Activated CD8-positive, alpha-beta memory T cell treated with anti-CD3 and anti-CD28 coated beads, Interleukin-2, amount 10 ng/mL, durations not matched to agents 7 days and 5 days (primary cell): ENCODE measurements at regions of chr14 and their contacts with region 1.

Region 1: GRCh38 chr14:20855652-20856291 is 35.4 kb upstream of the RNASE3 start:
- DNase-seq: peak; percentile 69
- ATAC-seq: peak; percentile 86
- H3K4me3 Mint-ChIP-seq: no peak overlapping the region
- H3K27ac Mint-ChIP-seq: no peak overlapping the region
- H3K4me1 Mint-ChIP-seq: no peaks in the 10 kb centered on the region
- H3K27me3 Mint-ChIP-seq: peaks cover 43% of the 10 kb centered on the region

Region 2: DNA sequence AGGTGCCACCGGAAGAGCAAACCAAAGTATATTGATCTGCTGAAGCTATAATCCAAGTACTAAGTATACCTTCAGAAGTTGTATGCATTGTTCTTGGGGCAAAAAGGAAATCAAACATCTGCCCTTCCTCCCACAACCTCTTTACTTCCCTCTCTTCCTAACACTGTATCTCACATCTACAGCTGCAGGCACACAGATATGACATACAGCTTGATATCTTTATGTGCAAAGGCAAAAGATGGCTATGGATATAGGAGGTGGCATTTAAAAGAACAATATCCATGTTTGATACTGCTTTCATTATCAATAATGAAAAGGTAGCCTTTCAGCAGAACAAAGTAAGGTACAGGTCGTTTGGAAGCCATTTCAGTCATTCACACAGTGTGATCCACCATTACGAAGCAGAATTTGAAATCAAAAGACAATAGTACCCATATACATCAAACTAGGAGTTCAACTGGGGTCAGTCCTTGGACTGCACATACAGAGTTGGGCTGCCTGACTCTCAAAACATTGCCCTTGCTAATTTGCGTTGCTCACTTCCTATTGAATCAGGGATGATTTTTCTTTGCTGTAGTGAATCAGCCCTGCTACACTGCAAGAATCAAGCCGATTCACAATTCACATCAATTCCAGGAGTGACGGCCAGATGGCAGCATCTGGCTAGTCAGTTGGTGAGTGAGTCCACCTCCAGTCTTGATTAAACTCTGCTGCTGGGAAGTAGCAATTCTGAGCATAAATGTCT is 158.3 kb before region 1 on chr14:
- CTCF ChIA-PET with region 1: interaction called, 21 read pairs
- DNase-seq: peak; percentile 76
- ATAC-seq: peak; percentile 76
- H3K4me3 Mint-ChIP-seq: no peak overlapping the region
- H3K27ac Mint-ChIP-seq: no peak overlapping the region
- H3K4me1 Mint-ChIP-seq: peaks cover 19% of the 10 kb centered on the region
- H3K27me3 Mint-ChIP-seq: peaks cover 2% of the 10 kb centered on the region

Region 3: GRCh38 chr14:20818861-20819260 is 36.9 kb before region 1 on chr14:
- CTCF ChIA-PET with region 1: no interaction called
- DNase-seq: no peak
- ATAC-seq: no peak
- H3K4me3 Mint-ChIP-seq: no peak overlapping the region
- H3K27ac Mint-ChIP-seq: no peak overlapping the region
- H3K4me1 Mint-ChIP-seq: no peaks in the 10 kb centered on the region
- H3K27me3 Mint-ChIP-seq: peaks cover 19% of the 10 kb centered on the region

Region 4: GRCh38 chr14:20873370-20874177 is 17.8 kb after region 1 on chr14:
- CTCF ChIA-PET with region 1: interaction called, 26 read pairs
- DNase-seq: peak; percentile 86
- ATAC-seq: peak; percentile 90
- H3K4me3 Mint-ChIP-seq: peak overlapping the region; percentile 8
- H3K27ac Mint-ChIP-seq: no peak overlapping the region
- H3K4me1 Mint-ChIP-seq: peaks cover 16% of the 10 kb centered on the region
- H3K27me3 Mint-ChIP-seq: peaks cover 38% of the 10 kb centered on the region

Region 5: GRCh38 chr14:20904393-20905029 is 48.7 kb after region 1 on chr14:
- CTCF ChIA-PET with region 1: no interaction called
- DNase-seq: no peak
- ATAC-seq: no peak
- H3K4me3 Mint-ChIP-seq: no peak overlapping the region
- H3K27ac Mint-ChIP-seq: no peak overlapping the region
- H3K4me1 Mint-ChIP-seq: no peaks in the 10 kb centered on the region
- H3K27me3 Mint-ChIP-seq: peaks cover 11% of the 10 kb centered on the region

Region 6: GRCh38 chr14:20956376-20956976 is 100.7 kb after region 1 on chr14:
- CTCF ChIA-PET with region 1: interaction called, 10 read pairs
- DNase-seq: no peak
- ATAC-seq: peak; percentile 34
- H3K4me3 Mint-ChIP-seq: no peak overlapping the region
- H3K27ac Mint-ChIP-seq: no peak overlapping the region
- H3K4me1 Mint-ChIP-seq: peaks cover 35% of the 10 kb centered on the region
- H3K27me3 Mint-ChIP-seq: peaks cover 35% of the 10 kb centered on the region